ENCODE measurements at regions of chr3 and their contacts with region 1.

Region 1: GRCh38 chr3:190524942-190525341 is 11.1 kb downstream of the IL1RAP start:
- DNase-seq: no peak
- CTCF ChIP-seq: no peak

Region 2: DNA sequence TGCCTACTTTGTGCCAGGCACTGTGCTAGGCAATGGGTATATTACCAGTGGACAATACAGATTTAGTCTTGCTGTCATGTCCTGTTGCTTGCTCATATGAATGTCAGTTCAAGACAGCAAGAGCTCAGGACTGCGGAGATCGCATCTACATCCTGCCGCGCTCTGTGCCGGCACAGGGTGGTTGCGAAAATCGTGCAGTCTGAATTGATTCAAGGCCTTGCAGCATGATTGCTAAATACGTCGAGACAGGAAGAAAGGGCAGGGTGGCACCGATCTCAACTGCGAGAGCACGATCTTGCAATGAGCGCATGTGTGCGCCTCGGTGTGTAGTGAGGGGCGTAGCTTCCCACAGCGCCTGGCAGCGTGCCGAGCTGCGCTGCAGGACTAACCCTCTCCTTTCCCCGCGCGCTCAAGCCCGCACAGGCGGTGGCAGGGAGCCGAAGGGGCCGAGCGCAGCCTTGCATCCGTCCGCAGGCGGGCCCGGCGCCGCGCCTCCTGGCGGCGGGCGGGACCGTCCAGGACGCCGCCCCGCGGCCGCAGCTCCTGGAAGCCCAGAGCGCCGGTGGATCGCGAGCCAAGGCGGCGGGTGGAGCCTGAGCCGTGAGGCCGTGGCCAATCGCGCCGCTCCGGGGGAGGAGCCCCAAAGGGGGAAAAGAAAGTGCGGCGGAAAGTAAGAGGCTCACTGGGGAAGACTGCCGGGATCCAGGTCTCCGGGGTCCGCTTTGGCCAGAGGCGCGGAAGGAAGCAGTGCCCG is 11.4 kb before region 1 on chr3 and contains the start of gene IL1RAP:
- CTCF ChIA-PET with region 1: interaction called, 14 read pairs
- POLR2A ChIA-PET with region 1: no interaction called
- DNase-seq: peak; percentile 93
- CTCF ChIP-seq: peak; percentile 53